ENCODE measurements at regions of chr10 and their contacts with region 1.

Region 1: DNA sequence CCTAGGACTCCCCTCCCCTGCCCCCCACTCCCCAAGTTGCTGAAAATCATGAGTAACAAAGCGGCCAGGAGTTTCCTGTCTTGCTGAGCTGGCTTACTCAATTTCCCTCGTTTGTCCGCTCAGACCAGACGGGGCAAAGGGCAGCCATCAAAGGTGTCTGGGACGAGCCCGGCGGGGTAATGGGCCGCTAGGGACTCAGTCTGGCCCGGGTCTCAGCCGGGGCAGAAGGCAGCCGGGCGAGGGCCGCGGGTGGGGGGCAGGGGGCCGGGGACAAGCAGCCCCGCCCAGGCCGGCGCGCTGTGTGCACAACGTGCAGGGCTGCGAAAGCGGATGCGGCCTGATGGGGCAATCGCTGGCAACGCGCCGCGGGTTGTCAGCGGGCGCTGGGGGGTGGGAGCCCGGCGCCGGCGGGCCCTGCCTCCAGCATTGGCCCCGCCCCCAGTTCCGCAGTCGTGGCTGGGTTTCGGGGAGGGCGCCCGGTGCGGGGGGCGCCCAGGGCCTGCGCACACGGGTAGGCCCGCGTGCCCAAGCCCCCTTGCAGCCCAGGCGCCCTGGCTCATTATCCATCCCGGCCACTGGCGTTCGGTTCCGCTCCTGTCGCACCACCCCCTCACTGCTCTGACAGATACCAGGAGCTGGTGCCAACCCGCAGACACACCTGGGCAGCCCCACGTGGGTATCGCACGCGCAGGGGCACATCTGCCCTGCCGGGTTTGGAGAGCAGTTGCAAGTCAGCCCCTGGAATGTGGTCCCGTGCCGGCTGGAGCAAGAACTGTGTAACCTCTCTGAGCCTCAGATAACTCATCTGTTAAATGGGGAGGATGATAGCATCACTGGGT is 35.1 kb downstream of the DNAJB12 start:
- DNase-seq: peak; percentile 82 to 96 (median 91)
- ATAC-seq: peak; percentile 57 to 78 (median 76)
- H3K4me3 ChIP-seq: peak overlapping the region; percentile 1 to 34 (median 18)
- H3K27ac ChIP-seq: peak overlapping the region; percentile 69 to 90 (median 82)
- H3K4me1 ChIP-seq: peaks cover 46 to 55% (median 54%) of the 10 kb centered on the region in 3 donors
- H3K27me3 ChIP-seq: no peaks in the 10 kb centered on the region
- CTCF ChIP-seq: no peak

Region 2: GRCh38 chr10:72223743-72224101 is 95.9 kb before region 1 on chr10:
- intact Hi-C with region 1: loop called in 1 of 3 experiments (anchors 10 kb)
- DNase-seq: no peak
- ATAC-seq: peak; percentile 5 to 32 (median 21)
- H3K4me3 ChIP-seq: no peak overlapping the region
- H3K27ac ChIP-seq: peak overlapping the region; percentile 25 to 93 (median 44)
- H3K4me1 ChIP-seq: peaks cover 44 to 69% (median 57%) of the 10 kb centered on the region in 3 donors
- H3K27me3 ChIP-seq: no peaks in the 10 kb centered on the region
- CTCF ChIP-seq: no peak